Breast epithelium (tissue), 4 donors: ENCODE measurements at regions of chr16 and their contacts with region 1.

Region 1: DNA sequence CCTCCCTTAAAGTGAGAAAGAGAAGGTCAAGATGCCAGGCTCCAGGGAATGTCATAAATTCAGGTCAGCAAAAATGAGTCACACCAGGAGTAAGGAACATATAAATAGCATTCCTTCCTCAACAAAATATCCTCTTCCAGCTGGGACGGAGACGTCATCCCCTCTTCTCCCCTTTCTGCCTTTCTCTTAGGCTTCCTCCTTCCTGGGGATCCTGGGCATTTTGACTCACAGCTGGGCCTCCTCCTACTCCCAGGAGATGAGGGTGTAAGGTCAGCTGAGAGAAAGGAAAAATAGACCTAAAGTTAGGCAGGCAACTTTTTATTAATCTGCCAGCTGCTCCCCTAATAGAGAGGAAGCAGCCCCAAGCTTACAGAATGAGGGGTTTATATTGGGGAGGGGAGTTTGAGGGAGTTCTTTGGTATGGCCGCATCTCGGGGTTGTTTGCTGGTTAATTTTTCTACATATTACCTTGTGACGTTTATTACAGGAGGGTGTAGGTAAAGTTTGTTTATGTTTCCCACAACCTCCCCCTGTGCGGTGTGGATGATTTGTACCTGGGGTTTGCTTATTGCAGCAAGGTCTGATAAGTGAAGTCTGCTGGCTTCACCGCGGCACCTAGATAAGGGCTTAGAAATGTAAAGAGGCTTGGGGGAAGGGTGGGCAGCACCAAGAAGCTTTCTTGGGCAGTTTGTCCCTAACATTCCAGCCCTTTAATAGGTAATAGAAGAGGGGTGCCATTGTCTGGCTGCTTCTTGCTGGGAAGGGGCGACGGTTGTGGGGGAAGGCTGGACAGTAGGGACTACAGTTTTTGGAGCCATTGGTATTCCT is 7.1 kb upstream of the ZNF747 start:
- DNase-seq: no peak
- H3K4me3 ChIP-seq: no peak overlapping the region
- H3K27ac ChIP-seq: no peak overlapping the region
- H3K4me1 ChIP-seq: no peaks in the 10 kb centered on the region
- H3K27me3 ChIP-seq: no peaks in the 10 kb centered on the region
- CTCF ChIP-seq: no peak
- POLR2A ChIP-seq: no peak

Region 2: GRCh38 chr16:30555315-30556124 is 13.8 kb after region 1 on chr16:
- intact Hi-C with region 1: loop called (anchors 2 kb)
- DNase-seq: no peak
- H3K4me3 ChIP-seq: no peak overlapping the region
- H3K27ac ChIP-seq: no peak overlapping the region
- H3K4me1 ChIP-seq: no peaks in the 10 kb centered on the region
- H3K27me3 ChIP-seq: no peaks in the 10 kb centered on the region
- CTCF ChIP-seq: no peak
- POLR2A ChIP-seq: no peak

Region 3: GRCh38 chr16:30628627-30629540 is 87.2 kb after region 1 on chr16:
- intact Hi-C with region 1: loop called (anchors 10 kb)
- DNase-seq: peak; percentile 68 to 89
- H3K4me3 ChIP-seq: peak overlapping the region in 2 of 3 donors; percentile 38 to 58
- H3K27ac ChIP-seq: peak overlapping the region; percentile 48 to 57
- H3K4me1 ChIP-seq: no peaks in the 10 kb centered on the region
- H3K27me3 ChIP-seq: no peaks in the 10 kb centered on the region
- CTCF ChIP-seq: peak; percentile 73 to 89 (median 86)
- POLR2A ChIP-seq: no peak